Activated naive CD4-positive, alpha-beta T cell treated with anti-CD3 and anti-CD28 coated beads for 36 hours (primary cell): ENCODE measurements at regions of chr11 and their contacts with region 1.

Region 1: DNA sequence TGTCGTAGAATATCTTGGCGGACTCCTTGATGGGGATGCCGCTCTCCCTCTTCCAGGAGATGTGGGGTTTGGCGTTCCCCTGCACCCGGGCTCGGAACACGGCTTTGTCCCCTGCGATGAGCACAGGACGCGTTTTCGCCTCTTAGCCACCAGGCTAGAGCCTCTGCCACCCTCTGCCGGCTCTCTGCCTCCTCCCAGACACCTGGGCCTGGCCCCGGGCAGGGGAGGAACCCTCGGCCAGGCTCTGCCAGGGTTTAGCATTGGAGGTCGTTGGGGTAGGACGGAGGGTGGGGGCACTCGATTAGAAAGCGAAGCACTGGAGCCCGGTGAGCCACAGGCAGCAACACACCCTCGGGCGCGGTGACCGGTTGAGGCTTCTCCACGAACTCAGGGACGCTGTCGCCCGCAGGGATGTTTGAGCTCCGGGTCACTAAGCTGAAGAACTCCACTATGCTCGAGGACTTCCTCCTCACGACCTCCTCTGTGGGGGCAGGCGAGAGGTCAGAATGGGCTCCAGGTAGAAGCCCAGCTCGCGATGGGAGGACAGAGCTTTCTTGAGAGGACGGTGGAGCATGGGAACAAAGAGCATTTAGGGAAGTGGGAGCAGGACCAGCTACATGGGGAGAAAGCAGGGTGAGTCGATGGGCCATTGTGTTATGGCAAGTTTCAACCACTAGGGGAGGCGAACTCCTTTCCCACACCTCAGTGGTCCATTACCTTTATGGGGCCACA is 4.3 kb downstream of the IGSF22 start:
- DNase-seq: peak; percentile 70
- H3K4me3 Mint-ChIP-seq: peak overlapping the region; percentile 78
- H3K27ac Mint-ChIP-seq: no peak overlapping the region
- H3K4me1 Mint-ChIP-seq: peaks cover 2% of the 10 kb centered on the region
- H3K27me3 Mint-ChIP-seq: no peaks in the 10 kb centered on the region

Region 2: DNA sequence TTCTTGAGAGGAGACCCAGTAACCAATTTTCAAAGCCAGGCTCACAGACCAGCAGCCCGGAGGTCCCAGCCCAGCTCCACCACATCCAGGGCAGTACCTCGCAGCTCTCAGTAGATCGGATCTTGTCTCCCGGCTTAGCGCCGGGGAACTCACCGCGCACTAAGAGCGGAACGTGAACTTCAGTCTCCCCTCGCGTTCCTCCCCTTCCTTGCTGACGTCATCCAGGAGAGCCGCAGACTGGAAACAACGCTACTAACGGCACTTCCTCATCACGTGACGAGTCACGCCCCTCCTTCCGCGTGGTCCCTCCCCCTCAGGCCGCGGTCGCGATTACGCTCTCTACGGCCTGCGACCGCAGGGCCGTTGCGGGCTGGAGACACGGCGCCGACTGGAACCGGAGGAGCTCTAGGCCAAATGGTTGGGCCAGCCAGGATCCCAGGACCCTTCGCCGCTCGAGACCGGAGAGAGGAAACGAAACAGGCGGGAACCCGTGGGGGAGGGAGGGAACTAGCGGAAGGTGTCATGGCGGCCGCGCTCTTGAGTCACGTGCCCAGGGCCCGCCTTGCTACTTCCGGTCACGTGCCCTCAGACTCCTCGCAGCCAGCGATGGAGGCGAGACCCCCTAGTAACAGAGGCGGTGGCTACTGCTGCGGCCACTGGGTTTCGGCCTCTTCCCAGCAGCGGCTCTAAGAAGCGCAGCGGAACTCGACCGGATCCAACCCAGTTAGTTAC is 399.6 kb before region 1 on chr11 and contains the starts of genes GTF2H1 and HPS5:
- CTCF ChIA-PET with region 1: interaction called, 6 read pairs
- intact Hi-C with region 1: loop called (anchors 5 kb)
- DNase-seq: peak; percentile 98
- H3K4me3 Mint-ChIP-seq: peak within 1 kb of the TSS; percentile 98
- H3K27ac Mint-ChIP-seq: peak within 1 kb of the TSS; percentile 100
- H3K4me1 Mint-ChIP-seq: peaks cover 64% of the 10 kb centered on the region
- H3K27me3 Mint-ChIP-seq: no peaks in the 10 kb centered on the region
- total RNA-seq, gene GTF2H1: 33.4 to 34.1 TPM
- total RNA-seq, gene HPS5: 21.7 to 21.9 TPM

Region 3: DNA sequence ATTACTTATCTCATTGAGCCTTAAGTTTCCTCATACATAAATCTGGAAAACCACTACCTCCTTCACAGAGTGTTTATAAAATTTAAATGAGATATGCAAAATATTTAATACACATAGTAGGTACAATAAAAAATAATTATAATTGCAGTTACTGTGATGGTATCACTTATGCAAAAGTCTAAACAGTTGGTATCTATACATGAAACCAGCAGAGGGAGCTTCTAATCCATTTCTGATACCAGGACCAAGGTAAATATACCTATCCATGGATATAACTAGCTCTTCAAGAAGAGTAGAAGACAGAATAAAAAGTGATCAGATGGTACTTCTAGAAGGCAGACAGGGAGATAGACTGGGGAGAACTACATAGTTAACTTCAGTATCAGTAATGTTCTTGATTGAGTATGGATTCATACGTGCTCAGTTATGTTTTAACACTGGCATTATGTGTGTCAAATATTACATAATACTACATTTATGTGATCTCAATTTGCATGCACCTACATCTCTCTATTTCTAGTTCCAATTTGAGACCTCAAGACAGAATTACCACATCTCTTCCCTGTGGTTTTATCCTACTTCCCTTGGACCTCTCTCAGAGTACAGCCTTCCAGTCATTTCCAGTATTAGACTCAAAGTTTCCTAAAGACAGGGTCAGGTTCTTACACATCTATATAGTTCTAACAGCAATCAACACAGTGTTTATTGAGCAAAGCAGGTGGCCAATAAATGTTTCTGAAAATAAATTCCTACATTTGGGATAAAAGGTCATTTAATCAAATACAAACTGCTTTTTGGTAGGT is 181.3 kb before region 1 on chr11:
- CTCF ChIA-PET with region 1: interaction called, 14 read pairs
- intact Hi-C with region 1: loop called (anchors 1 kb)
- DNase-seq: no peak
- H3K4me3 Mint-ChIP-seq: no peak overlapping the region
- H3K27ac Mint-ChIP-seq: no peak overlapping the region
- H3K4me1 Mint-ChIP-seq: peaks cover 6% of the 10 kb centered on the region
- H3K27me3 Mint-ChIP-seq: no peaks in the 10 kb centered on the region

Region 4: DNA sequence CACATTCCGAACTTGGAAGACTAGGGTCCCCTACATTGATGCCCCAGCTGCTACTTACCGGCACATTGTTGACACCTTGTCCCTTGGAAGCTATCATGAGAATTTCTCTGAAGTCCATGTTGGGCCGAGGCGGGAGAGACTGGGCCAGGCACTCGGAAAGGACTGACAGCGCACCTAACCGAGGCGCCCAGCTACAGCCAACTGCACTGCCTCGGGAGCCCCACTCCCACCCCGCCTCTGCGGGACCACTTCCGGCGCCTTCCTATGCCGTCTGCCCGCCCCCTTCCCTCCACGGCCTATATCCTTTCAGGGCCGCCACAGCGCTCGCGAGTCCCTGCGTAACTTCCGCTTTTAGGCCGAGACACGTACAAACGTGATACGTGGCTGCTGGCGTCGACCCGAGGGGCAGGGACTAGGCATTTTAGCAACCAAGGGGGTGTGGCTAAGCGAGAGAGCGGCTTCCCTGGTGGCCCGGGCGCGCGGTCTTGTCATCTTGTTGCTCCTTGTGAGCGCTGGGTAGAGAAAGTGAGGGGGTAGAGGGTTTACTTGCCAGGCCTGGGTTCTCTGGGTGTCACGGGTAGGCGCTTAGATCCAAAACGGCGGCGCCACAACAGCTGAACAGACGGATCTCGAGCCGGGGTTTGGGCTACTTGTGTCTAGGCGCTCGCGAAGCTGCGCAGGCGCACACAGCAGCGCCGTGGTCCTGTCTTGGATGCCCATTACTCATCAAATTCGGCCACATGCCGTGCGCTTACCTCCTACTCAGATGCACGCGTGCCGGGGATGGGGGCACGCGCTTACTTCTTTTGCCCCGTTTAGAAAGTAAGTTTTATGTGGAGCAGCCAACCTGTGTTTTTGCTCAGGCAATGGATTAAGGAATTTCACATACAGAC is 87.3 kb before region 1 on chr11 and contains the start of gene SPTY2D1:
- CTCF ChIA-PET with region 1: interaction called, 15 read pairs
- intact Hi-C with region 1: loop called (anchors 1 kb)
- DNase-seq: peak; percentile 99
- H3K4me3 Mint-ChIP-seq: peak within 1 kb of the TSS; percentile 87
- H3K27ac Mint-ChIP-seq: peak within 1 kb of the TSS; percentile 96
- H3K4me1 Mint-ChIP-seq: peaks cover 30% of the 10 kb centered on the region
- H3K27me3 Mint-ChIP-seq: no peaks in the 10 kb centered on the region
- total RNA-seq, gene SPTY2D1: 13.9 to 15.0 TPM

Region 5: GRCh38 chr11:18650859-18651557 is 70.7 kb before region 1 on chr11:
- CTCF ChIA-PET with region 1: no interaction called
- intact Hi-C with region 1: no loop called
- DNase-seq: peak; percentile 65
- H3K4me3 Mint-ChIP-seq: no peak overlapping the region
- H3K27ac Mint-ChIP-seq: no peak overlapping the region
- H3K4me1 Mint-ChIP-seq: no peaks in the 10 kb centered on the region
- H3K27me3 Mint-ChIP-seq: no peaks in the 10 kb centered on the region

Region 6: GRCh38 chr11:18698341-18699268 is 23.1 kb before region 1 on chr11 and contains the start of gene TMEM86A:
- CTCF ChIA-PET with region 1: interaction called, 51 read pairs
- intact Hi-C with region 1: loop called (anchors 1 kb)
- DNase-seq: peak; percentile 88
- H3K4me3 Mint-ChIP-seq: peak within 1 kb of the TSS; percentile 69
- H3K27ac Mint-ChIP-seq: no peak within 1 kb of the TSS
- H3K4me1 Mint-ChIP-seq: peaks cover 7% of the 10 kb centered on the region
- H3K27me3 Mint-ChIP-seq: peaks cover 3% of the 10 kb centered on the region
- total RNA-seq, gene TMEM86A: 0.05 to 0.15 TPM

Region 7: GRCh38 chr11:18731949-18732821 is 10.5 kb after region 1 on chr11:
- CTCF ChIA-PET with region 1: interaction called, 52 read pairs
- intact Hi-C with region 1: no loop called
- DNase-seq: peak; percentile 79
- H3K4me3 Mint-ChIP-seq: no peak overlapping the region
- H3K27ac Mint-ChIP-seq: no peak overlapping the region
- H3K4me1 Mint-ChIP-seq: peaks cover 3% of the 10 kb centered on the region
- H3K27me3 Mint-ChIP-seq: no peaks in the 10 kb centered on the region

Region 8: GRCh38 chr11:18768472-18768901 is 46.8 kb after region 1 on chr11:
- CTCF ChIA-PET with region 1: interaction called, 12 read pairs
- intact Hi-C with region 1: loop called (anchors 1 kb)
- DNase-seq: no peak
- H3K4me3 Mint-ChIP-seq: no peak overlapping the region
- H3K27ac Mint-ChIP-seq: no peak overlapping the region
- H3K4me1 Mint-ChIP-seq: peaks cover 8% of the 10 kb centered on the region
- H3K27me3 Mint-ChIP-seq: no peaks in the 10 kb centered on the region